HepG2 (cell line): ENCODE measurements at regions of chr19 and their contacts with region 1.

Region 1: DNA sequence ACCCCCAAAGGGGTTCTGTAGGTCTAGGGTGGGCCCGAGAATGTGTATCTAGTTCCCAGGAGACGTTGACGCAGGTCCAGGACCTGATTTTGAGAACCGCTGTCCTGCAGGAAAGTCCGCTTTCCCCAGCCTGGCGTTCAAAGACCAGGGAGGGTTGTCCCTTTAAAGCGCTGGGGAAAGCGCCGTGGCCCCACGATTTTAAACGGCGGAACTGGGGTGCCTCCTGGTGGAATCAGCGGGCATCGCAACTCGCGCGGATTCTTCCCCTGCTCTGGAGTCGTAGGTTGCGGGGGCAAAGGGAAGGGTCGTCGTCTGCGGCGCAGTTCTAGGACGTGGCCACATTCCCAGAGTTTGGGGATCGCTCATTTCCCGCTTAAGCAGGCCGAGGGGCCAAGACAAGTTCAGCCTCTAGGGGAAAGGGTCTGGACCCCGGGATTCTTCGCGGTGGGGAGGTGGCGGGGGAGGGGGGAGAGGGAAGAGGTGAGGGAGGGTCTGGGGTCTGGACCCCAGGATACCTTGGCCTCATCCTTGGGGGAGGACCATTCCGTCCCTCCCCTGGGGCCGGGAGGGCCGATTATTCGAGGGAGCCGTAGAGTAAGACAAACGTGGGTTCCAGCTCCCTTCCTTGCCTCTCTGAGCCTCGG is 7.7 kb downstream of the PNMA8B start:
- DNase-seq: peak; percentile 46
- ATAC-seq: peak; percentile 85
- H3K4me3 ChIP-seq: peak overlapping the region in 1 of 3 experiments; percentile 72; a peak in 3 of 6 replicates
- H3K27ac ChIP-seq: no peak overlapping the region
- H3K4me1 ChIP-seq: peaks cover 15% of the 10 kb centered on the region; the same call in 1 of the 2 replicates
- H3K27me3 ChIP-seq: peaks cover 3 to 35% of the 10 kb centered on the region in 2 experiments; a peak in 4 of 5 replicates
- CTCF ChIP-seq: peak; percentile 98
- EP300 ChIP-seq: no peak
- POLR2A ChIP-seq: no peak
- RAD21 ChIP-seq: peak; percentile 96

Region 2: GRCh38 chr19:46283771-46284170 is 204.2 kb before region 1 on chr19:
- CTCF ChIA-PET with region 1: interaction called, 18 read pairs
- POLR2A ChIA-PET with region 1: no interaction called
- in situ Hi-C with region 1: no loop called
- intact Hi-C with region 1: loop called (anchors 1 kb)
- DNase-seq: no peak
- ATAC-seq: no peak
- H3K4me3 ChIP-seq: no peak overlapping the region
- H3K27ac ChIP-seq: no peak overlapping the region
- H3K4me1 ChIP-seq: 0 out of 2 replicates have a peak, but pooled peaks cover under 1% of the 10 kb centered on the region
- H3K27me3 ChIP-seq: peaks cover 0 to 9% of the 10 kb centered on the region in 2 experiments; a peak in 2 of 5 replicates
- CTCF ChIP-seq: no peak
- EP300 ChIP-seq: no peak
- POLR2A ChIP-seq: no peak
- RAD21 ChIP-seq: no peak

Region 3: DNA sequence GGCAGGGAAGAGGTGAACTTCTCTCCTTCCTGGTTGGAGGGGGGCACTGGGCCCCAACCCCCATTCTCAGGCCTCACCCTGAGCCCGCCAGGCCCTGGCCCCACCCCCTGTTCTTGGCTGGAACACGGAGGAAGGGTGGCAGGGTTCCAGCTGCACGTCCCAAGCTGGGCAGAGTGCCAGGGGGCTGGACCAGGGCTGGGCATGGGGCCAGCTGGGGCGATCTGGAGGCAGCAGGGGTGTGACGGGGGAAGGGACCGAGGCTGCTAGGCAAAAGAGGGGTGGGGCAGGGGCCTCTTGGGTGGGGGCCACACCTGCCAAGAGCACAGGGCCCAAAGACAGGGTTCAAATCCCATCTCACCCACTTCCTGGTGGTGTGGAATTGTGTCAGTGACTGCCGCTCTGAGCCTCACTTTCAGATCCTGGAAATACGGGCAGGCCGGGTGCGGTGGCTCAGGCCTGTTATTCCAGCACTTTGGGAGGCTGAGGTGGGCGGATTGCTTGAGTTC is 188.9 kb before region 1 on chr19:
- CTCF ChIA-PET with region 1: no interaction called
- POLR2A ChIA-PET with region 1: no interaction called
- in situ Hi-C with region 1: loop called (anchors 5 kb)
- intact Hi-C with region 1: no loop called
- DNase-seq: peak; percentile 54
- ATAC-seq: peak; percentile 34
- H3K4me3 ChIP-seq: 0 out of 6 replicates have a peak overlapping the region, but pooled peaks of 1 of the 3 experiments have one; percentile 6
- H3K27ac ChIP-seq: no peak overlapping the region
- H3K4me1 ChIP-seq: peaks cover 75% of the 10 kb centered on the region
- H3K27me3 ChIP-seq: peaks cover 0 to 6% of the 10 kb centered on the region in 2 experiments; a peak in 1 of 5 replicates
- CTCF ChIP-seq: no peak
- EP300 ChIP-seq: 0 out of 4 replicates have a peak, but pooled peaks of 1 of the 2 experiments have one; percentile 27
- POLR2A ChIP-seq: no peak
- RAD21 ChIP-seq: no peak

Region 4: DNA sequence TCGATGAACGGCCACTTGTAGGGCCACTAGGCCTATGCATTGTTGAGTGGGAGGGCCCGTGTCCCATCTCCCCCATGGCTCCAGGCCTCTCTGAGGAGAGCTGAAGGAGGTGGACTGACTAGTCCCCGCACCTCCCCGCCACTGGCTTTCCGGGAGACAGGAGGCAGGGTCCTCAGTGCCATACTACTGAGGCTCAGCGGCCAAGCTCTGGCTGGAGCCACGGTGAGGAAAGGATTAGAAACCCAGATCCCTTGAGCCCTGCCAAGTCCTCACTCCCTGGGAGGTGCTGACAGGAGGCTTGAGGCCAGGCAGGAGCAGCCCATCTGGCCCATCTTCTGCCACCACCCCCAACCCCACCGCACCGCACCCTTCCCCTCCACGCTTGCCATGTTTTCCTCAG is 103.5 kb before region 1 on chr19:
- CTCF ChIA-PET with region 1: no interaction called
- POLR2A ChIA-PET with region 1: no interaction called
- in situ Hi-C with region 1: no loop called
- intact Hi-C with region 1: no loop called
- DNase-seq: no peak
- ATAC-seq: no peak
- H3K4me3 ChIP-seq: no peak overlapping the region
- H3K27ac ChIP-seq: no peak overlapping the region
- H3K4me1 ChIP-seq: peaks cover 11% of the 10 kb centered on the region
- H3K27me3 ChIP-seq: no peaks in the 10 kb centered on the region
- CTCF ChIP-seq: no peak
- EP300 ChIP-seq: no peak
- POLR2A ChIP-seq: no peak
- RAD21 ChIP-seq: no peak

Region 5: DNA sequence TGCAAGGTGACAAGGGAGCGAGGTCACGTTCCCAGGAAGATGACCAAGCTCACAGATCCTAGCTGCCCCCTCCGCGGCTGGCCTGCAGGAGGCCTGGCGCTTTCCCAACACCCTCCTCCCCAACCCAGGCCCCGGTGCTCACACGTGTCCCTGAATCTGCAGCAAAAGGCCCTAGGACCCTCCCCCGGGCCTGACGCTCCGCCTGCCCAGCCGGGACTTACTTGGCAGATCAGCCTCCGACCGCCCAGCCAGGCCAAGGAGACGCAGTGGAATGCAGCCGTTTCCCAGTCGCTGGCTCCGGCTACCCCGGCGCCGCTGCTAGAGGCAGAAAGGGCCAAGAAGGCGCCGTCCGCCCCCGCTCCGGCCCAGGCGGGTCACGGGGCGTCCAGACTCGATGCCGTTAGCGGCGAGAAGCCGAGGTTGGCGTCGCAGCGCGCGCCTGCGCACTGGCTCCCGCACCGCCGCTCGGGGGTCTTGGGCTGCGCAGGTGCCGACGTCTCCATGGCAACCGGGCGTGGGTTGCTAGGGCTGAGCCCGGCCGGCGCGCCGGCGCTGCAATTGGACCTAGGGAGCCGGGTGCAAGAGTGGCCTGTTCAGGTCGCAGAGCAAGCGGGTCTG is 16.7 kb before region 1 on chr19 and contains the start of gene PNMA8A:
- CTCF ChIA-PET with region 1: no interaction called
- POLR2A ChIA-PET with region 1: no interaction called
- in situ Hi-C with region 1: no loop called
- intact Hi-C with region 1: no loop called
- DNase-seq: no peak
- ATAC-seq: peak; percentile 63
- H3K4me3 ChIP-seq: peak within 1 kb of the TSS; percentile 30 to 40 (median 31); a peak in 3 of 6 replicates
- H3K27ac ChIP-seq: no peak within 1 kb of the TSS
- H3K4me1 ChIP-seq: peaks cover 27% of the 10 kb centered on the region
- H3K27me3 ChIP-seq: peaks cover 2 to 19% of the 10 kb centered on the region in 2 experiments; a peak in 3 of 5 replicates
- CTCF ChIP-seq: 0 out of 2 replicates have a peak, but pooled peaks have one; percentile 3
- EP300 ChIP-seq: no peak
- POLR2A ChIP-seq: no peak
- RAD21 ChIP-seq: no peak
- total RNA-seq, gene PNMA8A: 0.44 and 0.51 TPM in 2 replicates